ENCODE measurements at regions of chr2 and their contacts with region 1.

Region 1: DNA sequence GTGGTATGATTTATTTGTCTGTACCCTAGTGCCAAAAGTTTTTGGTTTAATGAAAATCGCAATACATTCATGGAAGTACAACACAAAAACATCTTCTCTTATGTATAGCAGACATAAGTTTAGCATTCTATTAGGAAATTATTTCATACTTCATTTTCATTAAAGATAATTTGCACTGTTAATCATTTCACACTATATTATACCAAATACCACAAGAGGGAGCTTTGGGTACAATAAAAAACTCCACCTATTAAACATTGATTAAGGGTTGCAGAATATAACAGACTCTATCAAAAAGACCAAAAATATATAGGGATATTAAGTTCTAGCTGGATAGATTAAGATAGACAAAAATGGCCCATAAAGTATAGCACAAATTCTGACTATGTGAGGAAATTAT is 79.0 kb downstream of the SLC66A3 start:
- DNase-seq: no peak
- H3K4me3 ChIP-seq: no peak overlapping the region
- CTCF ChIP-seq: peak; percentile 14

Region 2: DNA sequence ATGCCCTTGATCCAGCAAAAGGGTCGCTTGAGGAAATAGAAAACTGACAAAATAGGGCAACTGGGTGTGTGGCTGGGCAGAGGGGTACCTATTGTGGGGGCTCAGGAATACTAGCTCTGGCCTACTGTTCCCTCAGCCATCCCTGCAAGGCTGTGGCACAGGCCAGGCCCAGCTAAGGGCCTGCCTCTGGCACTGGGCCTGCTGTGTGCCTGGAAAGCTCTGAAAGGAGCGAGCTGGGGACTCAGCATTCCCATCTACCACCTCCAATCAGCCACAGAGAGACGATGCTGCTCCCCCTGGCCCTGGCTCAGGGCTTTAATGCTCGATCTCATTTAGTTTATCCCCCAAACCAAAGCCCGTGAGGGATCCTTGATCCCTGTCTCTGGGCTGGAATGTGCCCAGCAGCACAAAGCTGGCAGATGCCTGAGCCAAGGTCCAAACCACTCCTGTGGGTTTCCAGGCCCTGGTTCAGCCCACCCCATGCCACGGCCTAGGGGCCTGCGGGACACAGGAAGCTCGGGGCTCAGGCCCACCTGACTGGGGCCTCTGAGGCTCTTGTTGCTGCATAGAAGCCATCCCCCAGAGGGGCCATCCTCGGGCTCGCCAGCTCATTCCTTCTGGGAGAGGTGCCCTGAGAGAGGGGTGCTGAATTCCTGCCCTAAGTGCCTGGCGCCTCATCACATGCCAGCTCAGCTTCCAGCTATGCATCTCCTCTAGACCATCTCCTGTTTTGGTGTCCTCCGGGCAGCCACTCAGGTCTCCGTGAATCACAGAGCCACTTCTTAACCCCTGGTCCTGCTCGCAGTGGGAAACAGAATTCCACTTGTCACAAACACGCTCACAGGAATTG is 365.6 kb before region 1 on chr2:
- CTCF ChIA-PET with region 1: no interaction called
- POLR2A ChIA-PET with region 1: no interaction called
- DNase-seq: peak; percentile 68
- H3K4me3 ChIP-seq: no peak overlapping the region
- CTCF ChIP-seq: no peak

Region 3: DNA sequence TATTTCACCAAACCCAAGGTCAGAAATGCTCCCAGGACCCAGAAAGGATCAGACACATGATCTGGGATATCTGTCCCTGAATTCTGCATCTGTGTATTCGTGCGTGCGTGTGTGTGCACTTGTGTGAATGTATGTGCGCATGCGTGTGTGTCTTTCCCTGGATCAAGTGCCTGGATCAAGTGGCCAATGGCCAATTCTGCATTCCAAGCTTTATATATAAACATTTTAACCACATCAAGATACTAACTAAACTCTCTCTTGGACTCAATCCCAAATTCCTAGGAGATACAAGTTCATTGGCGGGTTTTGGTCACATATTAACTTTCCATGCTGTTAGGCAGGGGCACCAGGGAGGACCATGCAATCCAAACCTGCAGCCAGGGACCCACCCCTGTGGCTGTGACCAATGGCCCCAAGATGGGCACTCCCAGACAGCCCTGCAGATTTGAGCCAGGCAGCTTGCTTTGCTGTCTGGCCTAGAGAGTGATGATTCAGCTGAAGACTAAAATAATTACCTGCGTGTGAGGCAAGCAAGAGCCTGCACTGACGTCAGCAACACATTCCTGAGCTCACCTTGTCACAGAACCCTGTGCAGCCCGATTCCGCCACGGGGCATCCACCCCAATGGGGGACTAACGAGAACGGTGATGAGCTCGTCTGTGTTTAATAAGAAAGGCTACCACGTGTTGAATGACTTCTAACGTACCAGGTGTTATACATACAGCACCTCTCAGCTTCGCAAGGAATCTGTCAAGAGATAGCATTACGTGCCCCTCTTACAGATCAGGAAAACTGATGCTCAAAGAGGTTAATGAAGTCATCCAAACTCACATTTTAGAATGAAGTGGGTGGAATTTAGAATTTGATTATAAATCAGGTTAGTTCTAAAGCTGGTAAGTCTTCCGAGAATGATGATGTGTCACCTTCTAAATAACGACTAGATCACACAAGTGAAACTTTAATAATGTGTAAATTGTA is 155.5 kb after region 1 on chr2:
- CTCF ChIA-PET with region 1: interaction called, 11 read pairs
- POLR2A ChIA-PET with region 1: no interaction called
- DNase-seq: no peak
- H3K4me3 ChIP-seq: no peak overlapping the region
- CTCF ChIP-seq: no peak

Region 4: GRCh38 chr2:11396467-11397445 is 162.4 kb after region 1 on chr2:
- CTCF ChIA-PET with region 1: interaction called, 10 read pairs
- POLR2A ChIA-PET with region 1: no interaction called
- DNase-seq: no peak
- H3K4me3 ChIP-seq: no peak overlapping the region
- CTCF ChIP-seq: no peak

Region 5: GRCh38 chr2:11446733-11447248 is 212.5 kb after region 1 on chr2:
- CTCF ChIA-PET with region 1: interaction called, 58 read pairs
- POLR2A ChIA-PET with region 1: no interaction called
- DNase-seq: no peak
- H3K4me3 ChIP-seq: no peak overlapping the region
- CTCF ChIP-seq: peak; percentile 69

Region 6: GRCh38 chr2:12397854-12398253 is 1163.5 kb after region 1 on chr2:
- CTCF ChIA-PET with region 1: no interaction called
- POLR2A ChIA-PET with region 1: no interaction called
- DNase-seq: no peak
- H3K4me3 ChIP-seq: no peak overlapping the region
- CTCF ChIP-seq: no peak